GM12878 (cell line): ENCODE measurements at regions of chr4 and their contacts with region 1.

Region 1: GRCh38 chr4:27048429-27049238 is 188.0 kb downstream of the STIM2 start:
- DNase-seq: no peak
- ATAC-seq: peak; percentile 67
- H3K4me3 ChIP-seq: no peak overlapping the region
- H3K27ac ChIP-seq: no peak overlapping the region
- H3K4me1 ChIP-seq: no peaks in the 10 kb centered on the region
- H3K27me3 ChIP-seq: peaks cover 0 to 2% of the 10 kb centered on the region in 2 experiments; a peak in 3 of 4 replicates
- CTCF ChIP-seq: peak; percentile 52 to 69 (median 56)
- EP300 ChIP-seq: no peak
- POLR2A ChIP-seq: no peak
- RAD21 ChIP-seq: peak; percentile 72

Region 2: DNA sequence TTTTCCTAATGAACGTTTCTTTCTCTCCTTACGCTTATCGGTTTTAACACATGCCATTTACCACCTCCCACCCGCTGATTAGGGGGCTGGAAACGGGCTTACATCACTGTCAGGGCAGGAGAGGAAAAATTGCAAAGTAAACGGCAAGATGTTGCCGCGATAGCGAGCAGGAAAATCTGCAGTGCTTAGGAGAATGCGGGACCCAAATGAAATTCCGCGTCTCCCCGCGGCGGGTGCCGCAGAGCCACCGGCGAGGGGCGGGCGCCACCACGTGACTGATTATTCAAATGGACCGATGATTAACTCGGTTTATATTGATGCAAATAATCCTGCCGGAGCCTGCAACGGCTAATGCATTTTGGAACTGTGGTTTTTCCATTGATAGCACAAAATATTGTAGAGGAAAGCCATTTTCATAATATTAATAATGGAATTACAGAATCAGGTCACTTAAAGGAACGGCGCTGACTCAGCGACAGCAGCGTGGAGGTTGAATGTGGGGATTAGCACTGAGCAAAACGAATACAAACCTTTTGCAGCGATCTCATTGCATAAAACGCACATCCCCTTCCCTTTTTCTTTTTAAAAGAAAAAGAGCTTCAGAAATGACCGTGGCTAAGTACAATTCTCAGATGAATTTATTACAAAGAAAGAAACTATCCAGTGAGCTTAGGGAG is 36.2 kb after region 1 on chr4:
- CTCF ChIA-PET with region 1: interaction called, 22 read pairs
- POLR2A ChIA-PET with region 1: interaction called, 4 read pairs
- RAD21 ChIA-PET with region 1: interaction called, 5 read pairs
- SMC1A ChIA-PET with region 1: interaction called, 23 read pairs
- in situ Hi-C with region 1: no loop called
- intact Hi-C with region 1: no loop called
- DNase-seq: no peak
- ATAC-seq: no peak
- H3K4me3 ChIP-seq: no peak overlapping the region
- H3K27ac ChIP-seq: no peak overlapping the region
- H3K4me1 ChIP-seq: no peaks in the 10 kb centered on the region
- H3K27me3 ChIP-seq: peaks cover 0 to 11% of the 10 kb centered on the region in 2 experiments; a peak in 2 of 4 replicates
- CTCF ChIP-seq: no peak; a peak in 1 of 6 replicates
- EP300 ChIP-seq: no peak
- POLR2A ChIP-seq: no peak
- RAD21 ChIP-seq: no peak

Region 3: GRCh38 chr4:27111627-27112026 is 63.0 kb after region 1 on chr4:
- CTCF ChIA-PET with region 1: no interaction called
- POLR2A ChIA-PET with region 1: no interaction called
- RAD21 ChIA-PET with region 1: no interaction called
- SMC1A ChIA-PET with region 1: no interaction called
- in situ Hi-C with region 1: no loop called
- intact Hi-C with region 1: no loop called
- DNase-seq: no peak
- ATAC-seq: no peak
- H3K4me3 ChIP-seq: no peak overlapping the region
- H3K27ac ChIP-seq: no peak overlapping the region
- H3K4me1 ChIP-seq: no peaks in the 10 kb centered on the region
- H3K27me3 ChIP-seq: no peaks in the 10 kb centered on the region
- CTCF ChIP-seq: no peak
- EP300 ChIP-seq: no peak
- POLR2A ChIP-seq: no peak
- RAD21 ChIP-seq: no peak